ENCODE measurements at regions of chr1 and their contacts with region 1.

Region 1: DNA sequence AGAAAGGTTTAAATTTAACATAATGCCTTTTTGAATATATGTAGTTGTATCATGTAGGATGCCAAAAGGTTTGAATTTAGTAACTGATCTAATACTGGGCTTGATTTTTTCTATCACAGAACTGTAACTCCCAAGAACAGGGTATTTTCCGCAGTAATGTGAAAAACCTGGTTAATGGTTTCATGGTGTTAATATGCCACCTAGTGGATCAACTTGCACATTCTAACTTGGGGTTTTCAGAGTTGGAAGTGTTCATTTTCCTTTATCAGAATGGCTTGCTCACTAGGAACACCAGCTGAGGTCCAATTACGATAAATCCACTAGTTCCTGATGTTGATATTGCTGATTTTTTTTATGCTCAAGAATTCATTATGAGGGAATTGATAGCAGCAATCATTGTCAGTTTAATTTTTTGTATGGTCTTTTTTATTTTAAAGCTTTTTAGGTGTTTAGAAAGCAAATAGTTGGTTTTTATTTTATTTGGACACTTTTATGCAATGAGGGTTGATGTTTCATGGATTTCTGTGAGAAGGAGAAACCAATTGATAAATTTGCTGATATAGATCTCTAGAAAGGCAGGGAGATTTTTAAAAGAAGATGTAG is 157.2 kb downstream of the PLA2G4A start:
- DNase-seq: peak; percentile 43
- ATAC-seq: peak; percentile 72
- H3K4me3 ChIP-seq: no peak overlapping the region
- H3K27ac ChIP-seq: no peak overlapping the region
- H3K4me1 ChIP-seq: no peaks in the 10 kb centered on the region
- H3K27me3 ChIP-seq: no peaks in the 10 kb centered on the region
- CTCF ChIP-seq: peak; percentile 64; the same call in 1 of the 2 replicates

Region 2: GRCh38 chr1:186404454-186405051 is 581.4 kb before region 1 on chr1:
- CTCF ChIA-PET with region 1: no interaction called
- POLR2A ChIA-PET with region 1: no interaction called
- in situ Hi-C with region 1: no loop called
- intact Hi-C with region 1: loop called (anchors 2 kb)
- DNase-seq: peak; percentile 10
- ATAC-seq: no peak
- H3K4me3 ChIP-seq: no peak overlapping the region
- H3K27ac ChIP-seq: no peak overlapping the region
- H3K4me1 ChIP-seq: no peaks in the 10 kb centered on the region
- H3K27me3 ChIP-seq: no peaks in the 10 kb centered on the region
- CTCF ChIP-seq: peak; percentile 73; the same call in 1 of the 2 replicates

Region 3: GRCh38 chr1:186482661-186483255 is 503.2 kb before region 1 on chr1:
- CTCF ChIA-PET with region 1: no interaction called
- POLR2A ChIA-PET with region 1: no interaction called
- in situ Hi-C with region 1: no loop called
- intact Hi-C with region 1: loop called (anchors 1 kb)
- DNase-seq: peak; percentile 51
- ATAC-seq: peak; percentile 74
- H3K4me3 ChIP-seq: no peak overlapping the region
- H3K27ac ChIP-seq: no peak overlapping the region
- H3K4me1 ChIP-seq: no peaks in the 10 kb centered on the region
- H3K27me3 ChIP-seq: no peaks in the 10 kb centered on the region
- CTCF ChIP-seq: peak; percentile 93

Region 4: GRCh38 chr1:186605762-186606350 is 380.1 kb before region 1 on chr1:
- CTCF ChIA-PET with region 1: no interaction called
- POLR2A ChIA-PET with region 1: no interaction called
- in situ Hi-C with region 1: no loop called
- intact Hi-C with region 1: loop called (anchors 5 kb)
- DNase-seq: peak; percentile 20
- ATAC-seq: no peak
- H3K4me3 ChIP-seq: no peak overlapping the region
- H3K27ac ChIP-seq: no peak overlapping the region
- H3K4me1 ChIP-seq: no peaks in the 10 kb centered on the region
- H3K27me3 ChIP-seq: no peaks in the 10 kb centered on the region
- CTCF ChIP-seq: peak; percentile 62

Region 5: DNA sequence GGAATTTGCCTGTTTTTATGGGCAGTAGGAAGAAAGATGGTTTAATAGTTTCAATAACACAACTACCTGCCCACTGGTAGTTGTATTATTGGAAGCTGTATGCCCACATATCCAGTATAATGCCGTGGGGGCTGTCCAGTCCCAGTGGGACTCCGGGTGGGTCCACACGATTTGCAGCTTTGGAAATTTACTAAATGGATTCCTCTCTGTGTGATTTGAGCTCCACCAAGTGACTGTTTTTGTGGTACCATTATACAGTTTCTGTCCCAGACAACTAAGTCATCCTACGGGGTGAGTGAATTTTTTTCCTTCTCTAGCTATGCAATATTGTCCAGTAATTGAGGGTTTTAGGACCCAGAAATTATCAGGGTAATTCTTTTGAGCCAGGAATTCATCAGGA is 70.4 kb before region 1 on chr1:
- CTCF ChIA-PET with region 1: no interaction called
- POLR2A ChIA-PET with region 1: no interaction called
- in situ Hi-C with region 1: no loop called
- intact Hi-C with region 1: loop called (anchors 5 kb)
- DNase-seq: no peak
- ATAC-seq: no peak
- H3K4me3 ChIP-seq: no peak overlapping the region
- H3K27ac ChIP-seq: no peak overlapping the region
- H3K4me1 ChIP-seq: no peaks in the 10 kb centered on the region
- H3K27me3 ChIP-seq: no peaks in the 10 kb centered on the region
- CTCF ChIP-seq: peak; percentile 20; the same call in 1 of the 2 replicates